Thyroid gland (tissue), 4 donors: ENCODE measurements at regions of chr16 and their contacts with region 1.

Region 1: DNA sequence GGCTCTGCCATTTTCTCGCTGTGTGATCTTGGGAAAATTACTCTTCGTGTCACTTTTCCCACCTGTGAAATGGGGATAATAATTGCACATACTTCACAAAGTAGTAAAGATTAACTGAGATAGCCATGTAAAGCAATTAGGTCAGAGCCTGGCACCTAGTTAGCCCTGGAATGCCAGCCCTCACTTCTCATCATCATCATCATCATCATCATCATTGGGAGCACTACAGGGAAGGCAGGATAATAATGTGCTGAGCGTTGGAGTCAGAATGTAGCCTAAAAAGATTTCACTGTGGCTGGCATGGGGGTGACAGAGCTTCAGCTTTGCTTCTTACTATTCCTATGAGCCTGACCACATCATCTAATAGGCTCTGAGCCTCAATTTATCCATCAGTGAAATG is 362.6 kb downstream of the TOX3 start:
- DNase-seq: no peak
- H3K4me3 ChIP-seq: no peak overlapping the region
- H3K27ac ChIP-seq: no peak overlapping the region
- H3K4me1 ChIP-seq: no peaks in the 10 kb centered on the region
- H3K27me3 ChIP-seq: no peaks in the 10 kb centered on the region
- CTCF ChIP-seq: no peak
- POLR2A ChIP-seq: no peak

Region 2: DNA sequence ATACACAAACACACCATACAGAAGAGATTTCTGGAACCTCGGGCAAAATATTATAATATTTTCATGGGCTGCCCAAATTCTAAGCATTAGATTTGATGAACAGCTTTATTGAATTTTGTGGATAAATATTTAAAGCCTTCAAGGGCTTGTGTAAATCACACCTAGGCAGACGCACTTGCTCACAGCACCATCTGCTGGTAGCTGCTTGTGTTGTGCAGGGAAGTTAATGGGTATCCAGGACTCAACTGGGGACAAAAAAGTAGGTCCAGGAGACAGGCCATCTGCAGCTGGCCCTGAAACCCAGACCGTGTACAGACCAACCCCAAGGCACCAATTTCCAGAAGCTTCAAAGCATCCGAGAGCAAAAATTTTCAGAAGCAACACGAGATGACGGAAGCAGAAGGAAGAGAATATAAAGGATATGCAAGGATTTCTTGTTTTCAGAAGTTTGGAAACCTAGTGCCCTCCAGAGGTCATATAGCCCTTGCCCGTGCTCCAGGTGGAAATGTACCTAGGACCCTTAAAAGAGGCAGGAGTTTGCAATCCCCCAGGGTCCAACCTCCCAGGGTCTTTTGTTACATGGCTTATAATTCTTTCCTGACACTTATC is 728.3 kb after region 1 on chr16:
- intact Hi-C with region 1: loop called (anchors 10 kb)
- DNase-seq: peak; percentile 55 to 65
- H3K4me3 ChIP-seq: no peak overlapping the region
- H3K27ac ChIP-seq: no peak overlapping the region
- H3K4me1 ChIP-seq: no peaks in the 10 kb centered on the region
- H3K27me3 ChIP-seq: no peaks in the 10 kb centered on the region
- CTCF ChIP-seq: peak; percentile 21 to 78 (median 46)
- POLR2A ChIP-seq: no peak